ENCODE measurements at regions of chr10 and their contacts with region 1.

Region 1: DNA sequence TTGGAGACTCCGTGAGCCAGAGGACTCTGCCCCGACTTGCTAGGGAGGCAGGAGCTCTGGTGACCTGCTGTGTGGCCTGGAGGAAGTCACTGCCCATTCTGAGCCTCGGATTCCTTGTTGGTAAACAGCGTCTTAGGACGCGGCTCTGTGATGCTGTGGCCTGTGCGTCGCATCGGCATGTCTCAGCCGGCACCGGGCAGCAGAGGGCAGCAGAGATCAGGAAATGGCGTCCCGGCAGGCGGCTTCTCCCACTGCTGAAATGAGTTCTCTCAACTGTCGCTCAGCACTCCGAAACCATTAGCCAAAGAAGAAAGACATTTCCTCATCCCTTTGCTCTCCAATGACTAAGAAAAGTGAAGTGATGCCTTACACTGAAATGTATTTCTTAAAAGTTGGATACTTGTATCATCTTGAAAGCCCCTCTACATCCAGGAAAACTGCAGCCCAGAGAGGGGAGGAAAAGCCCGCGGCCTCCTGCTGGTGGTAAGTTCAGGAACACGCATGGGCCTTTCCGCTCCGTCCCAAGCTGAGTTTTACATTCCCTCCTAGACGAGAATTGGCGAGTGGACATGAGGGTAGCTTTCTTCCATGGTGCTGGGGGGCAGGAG is 91.7 kb downstream of the WDR11 start:
- DNase-seq: peak; percentile 63 to 78
- ATAC-seq: peak; percentile 88 to 98 (median 90)
- H3K4me3 ChIP-seq: no peak overlapping the region
- H3K4me3 Mint-ChIP-seq: peak overlapping the region; percentile 40
- H3K27ac ChIP-seq: no peak overlapping the region
- H3K27ac Mint-ChIP-seq: no peak overlapping the region
- H3K4me1 ChIP-seq: peaks cover 7% of the 10 kb centered on the region
- H3K4me1 Mint-ChIP-seq: peaks cover 0 to 11% of the 10 kb centered on the region in 2 donors
- H3K27me3 ChIP-seq: no peaks in the 10 kb centered on the region
- H3K27me3 Mint-ChIP-seq: peaks cover 7 to 16% of the 10 kb centered on the region in 2 donors
- CTCF ChIP-seq: peak; percentile 76

Region 2: DNA sequence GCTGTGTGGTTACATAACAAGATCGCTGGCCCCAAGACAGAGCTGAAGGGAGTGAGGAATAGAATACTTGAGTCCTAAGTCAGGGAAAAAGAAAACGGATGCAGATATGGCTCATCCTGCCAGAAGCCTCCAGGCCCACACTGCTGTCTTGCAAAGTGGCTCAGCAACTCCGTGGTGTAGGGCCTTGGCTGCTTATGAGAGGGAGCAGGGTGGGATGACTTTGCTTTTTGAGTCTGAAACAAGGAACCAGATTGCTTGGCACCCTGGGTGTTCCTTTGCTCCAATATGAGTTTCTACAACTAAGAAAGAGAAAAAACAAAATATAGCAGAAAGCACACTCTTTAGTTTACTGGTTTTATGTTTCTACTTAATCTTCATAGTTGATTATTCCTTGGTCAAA is 285.5 kb before region 1 on chr10:
- intact Hi-C with region 1: no loop called
- DNase-seq: no peak
- ATAC-seq: no peak
- H3K4me3 ChIP-seq: no peak overlapping the region
- H3K4me3 Mint-ChIP-seq: no peak overlapping the region
- H3K27ac ChIP-seq: no peak overlapping the region
- H3K27ac Mint-ChIP-seq: no peak overlapping the region
- H3K4me1 ChIP-seq: no peaks in the 10 kb centered on the region
- H3K4me1 Mint-ChIP-seq: peaks cover 5 to 6% of the 10 kb centered on the region in 2 donors
- H3K27me3 ChIP-seq: peaks cover 2% of the 10 kb centered on the region
- H3K27me3 Mint-ChIP-seq: peaks cover 16 to 44% of the 10 kb centered on the region in 2 donors
- CTCF ChIP-seq: no peak

Region 3: GRCh38 chr10:121096617-121097461 is 153.9 kb after region 1 on chr10:
- intact Hi-C with region 1: no loop called
- DNase-seq: no peak
- ATAC-seq: no peak
- H3K4me3 ChIP-seq: no peak overlapping the region
- H3K4me3 Mint-ChIP-seq: no peak overlapping the region
- H3K27ac ChIP-seq: no peak overlapping the region
- H3K27ac Mint-ChIP-seq: no peak overlapping the region
- H3K4me1 ChIP-seq: no peaks in the 10 kb centered on the region
- H3K4me1 Mint-ChIP-seq: no peaks in the 10 kb centered on the region
- H3K27me3 ChIP-seq: no peaks in the 10 kb centered on the region
- H3K27me3 Mint-ChIP-seq: peaks cover 0 to 4% of the 10 kb centered on the region in 2 donors
- CTCF ChIP-seq: no peak

Region 4: DNA sequence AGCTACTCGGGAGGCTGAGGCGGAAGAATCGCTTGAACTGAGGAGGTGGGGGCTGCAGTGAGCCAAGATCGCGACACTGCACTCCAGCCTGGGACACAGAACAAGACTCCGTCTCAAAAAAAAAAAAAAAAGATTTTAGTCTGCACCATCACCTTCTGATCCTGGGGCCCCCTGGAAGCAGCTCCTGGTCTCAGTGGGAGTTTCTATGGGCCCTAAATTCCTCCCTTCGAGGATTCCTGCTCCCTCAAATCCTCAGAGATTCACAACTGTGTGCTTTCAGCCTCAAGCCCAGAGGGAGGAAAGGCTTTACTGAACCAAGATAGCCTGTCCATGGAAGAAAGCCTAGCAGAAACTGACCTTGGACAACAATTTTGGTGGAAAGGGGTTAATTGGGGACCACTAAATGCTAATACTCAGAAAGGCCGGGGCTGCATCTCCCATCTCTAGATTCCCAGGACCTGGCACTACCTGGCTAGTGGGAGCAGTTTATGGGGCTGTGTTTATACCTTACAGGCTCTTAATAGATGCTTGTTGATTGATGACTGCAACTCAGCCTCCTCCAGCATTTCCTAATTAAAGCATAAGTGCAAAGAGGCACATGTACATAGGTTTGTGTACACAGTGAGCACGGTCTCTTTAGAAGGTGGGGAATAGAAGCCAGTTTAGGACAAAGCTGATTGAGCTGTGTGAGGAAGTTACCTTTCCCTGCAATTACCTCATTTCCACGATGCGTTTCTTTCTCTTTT is 664.6 kb after region 1 on chr10:
- intact Hi-C with region 1: loop called (anchors 2 kb)
- DNase-seq: no peak
- ATAC-seq: no peak
- H3K4me3 ChIP-seq: no peak overlapping the region
- H3K4me3 Mint-ChIP-seq: no peak overlapping the region
- H3K27ac ChIP-seq: no peak overlapping the region
- H3K27ac Mint-ChIP-seq: no peak overlapping the region
- H3K4me1 ChIP-seq: peaks cover 2% of the 10 kb centered on the region
- H3K4me1 Mint-ChIP-seq: no peaks in the 10 kb centered on the region
- H3K27me3 ChIP-seq: peaks cover 2% of the 10 kb centered on the region
- H3K27me3 Mint-ChIP-seq: peaks cover 0 to 10% of the 10 kb centered on the region in 2 donors
- CTCF ChIP-seq: no peak

Region 5: DNA sequence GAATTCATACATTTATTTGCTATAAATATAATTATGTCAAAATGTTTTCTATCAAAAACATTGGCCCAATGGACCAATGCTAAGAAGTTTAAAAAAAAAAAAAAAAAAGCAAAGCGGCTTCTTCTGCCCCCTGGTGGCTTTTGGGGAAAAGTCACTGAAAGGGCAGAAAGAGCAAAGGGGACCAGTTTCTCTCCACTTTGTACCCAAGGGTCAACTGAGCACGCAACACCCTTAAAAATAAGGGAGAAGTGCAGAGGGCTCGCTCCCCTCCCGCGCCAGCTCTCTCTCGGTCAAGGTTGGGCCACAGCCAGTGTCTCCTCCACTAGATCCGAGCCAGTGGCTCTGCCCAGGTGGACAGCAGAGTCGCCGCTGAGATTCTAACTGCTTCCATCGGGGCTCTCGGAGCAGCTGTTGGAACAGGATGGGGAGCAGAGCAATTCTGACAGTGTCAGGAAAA is 791.7 kb after region 1 on chr10:
- intact Hi-C with region 1: loop called (anchors 1 kb)
- DNase-seq: peak in 1 of 2 donors; percentile 25
- ATAC-seq: no peak
- H3K4me3 ChIP-seq: no peak overlapping the region
- H3K4me3 Mint-ChIP-seq: no peak overlapping the region
- H3K27ac ChIP-seq: no peak overlapping the region
- H3K27ac Mint-ChIP-seq: no peak overlapping the region
- H3K4me1 ChIP-seq: peaks cover 5% of the 10 kb centered on the region
- H3K4me1 Mint-ChIP-seq: peaks cover 10 to 27% of the 10 kb centered on the region in 2 donors
- H3K27me3 ChIP-seq: peaks cover 3% of the 10 kb centered on the region
- H3K27me3 Mint-ChIP-seq: peaks cover 21 to 32% of the 10 kb centered on the region in 2 donors
- CTCF ChIP-seq: peak; percentile 67

Region 6: GRCh38 chr10:121900443-121901174 is 957.7 kb after region 1 on chr10:
- intact Hi-C with region 1: loop called (anchors 1 kb)
- DNase-seq: peak in 1 of 2 donors; percentile 68
- ATAC-seq: peak; percentile 73 to 78 (median 77)
- H3K4me3 ChIP-seq: no peak overlapping the region
- H3K4me3 Mint-ChIP-seq: no peak overlapping the region
- H3K27ac ChIP-seq: no peak overlapping the region
- H3K27ac Mint-ChIP-seq: peak overlapping the region in 1 of 2 donors; percentile 48
- H3K4me1 ChIP-seq: no peaks in the 10 kb centered on the region
- H3K4me1 Mint-ChIP-seq: peaks cover 5 to 6% of the 10 kb centered on the region in 2 donors
- H3K27me3 ChIP-seq: no peaks in the 10 kb centered on the region
- H3K27me3 Mint-ChIP-seq: no peaks in the 10 kb centered on the region
- CTCF ChIP-seq: peak; percentile 73

Measured in natural killer cell (primary cell).